IMR-90 (cell line): ENCODE measurements at regions of chr18 and their contacts with region 1.

Region 1: GRCh38 chr18:60549338-60549960 is 176.9 kb upstream of the MC4R start:
- DNase-seq: peak; percentile 78
- ATAC-seq: peak; percentile 66
- H3K4me3 ChIP-seq: no peak overlapping the region
- H3K27ac ChIP-seq: no peak overlapping the region
- H3K4me1 ChIP-seq: no peaks in the 10 kb centered on the region
- H3K27me3 ChIP-seq: no peaks in the 10 kb centered on the region
- CTCF ChIP-seq: peak; percentile 90
- POLR2A ChIP-seq: no peak
- RAD21 ChIP-seq: peak; percentile 88

Region 2: DNA sequence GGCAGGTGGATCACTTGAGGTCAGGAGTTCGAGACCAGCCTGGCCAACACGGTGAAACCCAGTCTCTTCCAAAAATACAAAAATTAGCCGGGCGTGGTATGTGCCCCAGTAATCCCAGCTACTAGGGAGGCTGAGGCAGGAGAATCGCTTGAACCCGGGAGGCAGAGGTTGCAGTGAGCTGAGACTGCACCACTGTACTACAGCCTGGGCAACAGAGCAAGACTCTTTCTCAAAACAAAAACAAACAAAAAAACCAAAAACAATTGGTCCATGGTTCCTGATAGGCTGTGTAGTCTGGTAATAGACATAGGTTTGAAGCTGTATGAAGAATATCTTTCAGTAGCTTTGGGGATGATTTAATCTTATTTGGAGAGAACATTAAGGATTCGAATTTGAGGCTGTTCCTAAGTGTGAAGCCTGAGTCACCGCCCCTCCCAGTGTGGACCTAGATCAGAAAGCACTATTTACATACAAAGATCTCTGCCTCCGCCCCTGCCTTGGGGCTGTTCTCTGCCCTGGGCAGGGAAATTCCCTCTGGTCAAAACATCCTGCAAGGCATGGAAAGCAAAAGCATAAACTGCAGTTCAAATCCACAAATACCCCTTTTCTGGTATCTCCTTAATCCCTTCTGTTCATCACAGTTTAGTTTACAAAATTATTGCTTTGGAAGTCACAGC is 702.5 kb before region 1 on chr18:
- CTCF ChIA-PET with region 1: no interaction called
- POLR2A ChIA-PET with region 1: no interaction called
- dilution Hi-C with region 1: no loop called
- in situ Hi-C with region 1: loop called (anchors 10 kb)
- intact Hi-C with region 1: loop called (anchors 5 kb)
- DNase-seq: peak; percentile 73
- ATAC-seq: peak; percentile 93
- H3K4me3 ChIP-seq: no peak overlapping the region
- H3K27ac ChIP-seq: no peak overlapping the region
- H3K4me1 ChIP-seq: peaks cover 6% of the 10 kb centered on the region; the same call in 1 of the 2 replicates
- H3K27me3 ChIP-seq: no peaks in the 10 kb centered on the region
- CTCF ChIP-seq: no peak
- POLR2A ChIP-seq: no peak
- RAD21 ChIP-seq: no peak

Region 3: GRCh38 chr18:59988098-59988706 is 561.2 kb before region 1 on chr18:
- CTCF ChIA-PET with region 1: interaction called, 17 read pairs
- POLR2A ChIA-PET with region 1: no interaction called
- dilution Hi-C with region 1: loop called (anchors 25 kb)
- in situ Hi-C with region 1: loop called (anchors 5 kb)
- intact Hi-C with region 1: loop called (anchors 1 kb)
- DNase-seq: peak; percentile 74
- ATAC-seq: peak; percentile 77
- H3K4me3 ChIP-seq: no peak overlapping the region
- H3K27ac ChIP-seq: no peak overlapping the region
- H3K4me1 ChIP-seq: no peaks in the 10 kb centered on the region
- H3K27me3 ChIP-seq: peaks cover 19% of the 10 kb centered on the region
- CTCF ChIP-seq: peak; percentile 98
- POLR2A ChIP-seq: no peak
- RAD21 ChIP-seq: peak; percentile 96

Region 4: DNA sequence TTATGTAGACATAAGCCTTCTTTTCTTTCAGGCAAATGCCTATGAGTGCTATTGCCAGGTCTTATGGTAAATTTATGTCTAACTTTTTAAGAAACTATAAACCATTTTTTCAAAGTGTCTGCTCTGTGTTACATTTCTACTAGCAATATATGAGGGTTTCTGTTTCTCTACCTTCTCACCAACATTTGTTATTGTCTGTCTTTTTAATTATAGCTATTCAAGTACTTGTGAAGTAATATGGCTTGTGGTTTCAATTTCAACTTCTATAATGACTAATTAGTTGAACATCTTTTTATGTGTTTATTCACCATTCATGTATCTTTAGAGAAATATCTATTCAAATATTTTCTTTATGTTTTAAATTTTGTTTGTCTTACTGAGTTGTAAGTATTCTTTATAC is 36.2 kb after region 1 on chr18:
- CTCF ChIA-PET with region 1: no interaction called
- POLR2A ChIA-PET with region 1: interaction called, 14 read pairs
- dilution Hi-C with region 1: no loop called
- in situ Hi-C with region 1: no loop called
- intact Hi-C with region 1: no loop called
- DNase-seq: no peak
- ATAC-seq: no peak
- H3K4me3 ChIP-seq: no peak overlapping the region
- H3K27ac ChIP-seq: no peak overlapping the region
- H3K4me1 ChIP-seq: no peaks in the 10 kb centered on the region
- H3K27me3 ChIP-seq: no peaks in the 10 kb centered on the region
- CTCF ChIP-seq: no peak
- POLR2A ChIP-seq: no peak
- RAD21 ChIP-seq: no peak